GM13977 (cell line): ENCODE measurements at regions of chr2 and their contacts with region 1.

Region 1: GRCh38 chr2:88059979-88060906 is 4.7 kb upstream of the KRCC1 start:
- DNase-seq: peak; percentile 76
- CTCF ChIP-seq: peak; percentile 79

Region 2: DNA sequence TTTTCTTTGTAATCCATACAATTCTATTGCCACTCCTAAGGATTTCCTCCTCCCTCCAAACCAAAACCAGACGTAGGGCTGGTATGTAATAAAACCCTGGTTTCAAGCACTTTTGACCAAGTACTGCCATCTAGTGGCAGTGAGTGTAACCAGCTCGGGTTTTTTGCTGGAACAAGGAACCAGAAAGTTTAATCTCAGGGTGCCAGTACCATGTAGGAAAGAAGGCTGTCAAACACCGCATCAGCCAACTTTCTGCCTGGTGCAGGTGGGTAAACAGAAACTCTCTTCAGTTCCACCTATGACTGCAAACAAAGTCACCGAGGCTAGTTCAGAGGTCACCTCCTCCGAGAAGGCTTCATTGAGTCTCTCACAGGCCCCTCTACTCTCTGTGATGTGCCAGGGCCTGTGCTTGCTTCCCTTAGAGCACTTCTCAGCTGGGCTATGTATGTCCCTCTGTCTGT is 99.7 kb after region 1 on chr2:
- in situ Hi-C with region 1: loop called (anchors 10 kb)
- DNase-seq: peak; percentile 63
- CTCF ChIP-seq: peak; percentile 72